Activated CD4-positive, alpha-beta T cell treated with anti-CD3 and anti-CD28 coated beads, Interleukin-2, amount 10 ng/mL, durations not matched to agents 7 days and 5 days (primary cell): ENCODE measurements at regions of chr10 and their contacts with region 1.

Region 1: GRCh38 chr10:101141616-101142532 is 10.8 kb downstream of the TLX1 start:
- DNase-seq: peak; percentile 80
- H3K4me3 Mint-ChIP-seq: no peak overlapping the region
- H3K27ac Mint-ChIP-seq: no peak overlapping the region
- H3K4me1 Mint-ChIP-seq: peaks cover 2% of the 10 kb centered on the region
- H3K27me3 Mint-ChIP-seq: peaks cover 90% of the 10 kb centered on the region

Region 2: GRCh38 chr10:101042667-101043355 is 99.1 kb before region 1 on chr10:
- CTCF ChIA-PET with region 1: interaction called, 18 read pairs
- POLR2A ChIA-PET with region 1: no interaction called
- DNase-seq: peak; percentile 89
- H3K4me3 Mint-ChIP-seq: peak overlapping the region; percentile 89
- H3K27ac Mint-ChIP-seq: peak overlapping the region; percentile 85
- H3K4me1 Mint-ChIP-seq: peaks cover 33% of the 10 kb centered on the region
- H3K27me3 Mint-ChIP-seq: peaks cover 38% of the 10 kb centered on the region

Region 3: DNA sequence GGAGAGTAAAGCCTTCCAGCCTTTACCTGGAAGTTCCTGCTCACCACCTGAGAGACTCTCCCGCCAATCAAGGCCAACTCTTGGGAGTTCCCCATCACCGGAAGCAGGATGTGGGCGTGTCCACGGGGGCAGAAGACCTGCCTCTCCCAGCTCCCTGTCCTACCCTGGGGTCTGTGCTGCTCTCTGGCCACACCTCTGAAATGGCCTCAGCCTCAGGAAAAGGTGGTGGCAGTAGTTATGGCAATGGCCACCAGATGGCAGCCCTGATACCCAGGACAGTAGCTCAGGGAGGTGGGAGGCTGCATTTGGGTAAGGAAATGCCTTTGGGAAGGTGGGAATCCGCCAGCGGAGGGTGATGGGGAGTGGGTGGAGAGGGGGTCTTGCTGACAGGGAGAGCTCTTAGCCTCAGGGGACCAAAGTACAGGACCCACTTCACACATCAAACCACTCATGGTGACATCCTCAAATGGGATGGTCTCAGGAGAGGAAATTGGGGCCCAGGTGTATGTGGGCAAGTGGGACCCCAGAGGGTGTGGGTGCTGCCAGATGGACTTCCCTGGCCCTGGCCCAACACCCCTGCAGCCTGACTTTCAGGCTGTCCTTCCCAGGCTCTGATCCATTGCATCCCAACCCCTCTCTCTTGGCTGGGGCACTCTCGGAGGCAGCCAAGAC is 46.2 kb before region 1 on chr10:
- CTCF ChIA-PET with region 1: interaction called, 90 read pairs
- POLR2A ChIA-PET with region 1: interaction called, 3 read pairs
- DNase-seq: peak; percentile 75
- H3K4me3 Mint-ChIP-seq: no peak overlapping the region
- H3K27ac Mint-ChIP-seq: no peak overlapping the region
- H3K4me1 Mint-ChIP-seq: no peaks in the 10 kb centered on the region
- H3K27me3 Mint-ChIP-seq: peaks cover 18% of the 10 kb centered on the region

Region 4: DNA sequence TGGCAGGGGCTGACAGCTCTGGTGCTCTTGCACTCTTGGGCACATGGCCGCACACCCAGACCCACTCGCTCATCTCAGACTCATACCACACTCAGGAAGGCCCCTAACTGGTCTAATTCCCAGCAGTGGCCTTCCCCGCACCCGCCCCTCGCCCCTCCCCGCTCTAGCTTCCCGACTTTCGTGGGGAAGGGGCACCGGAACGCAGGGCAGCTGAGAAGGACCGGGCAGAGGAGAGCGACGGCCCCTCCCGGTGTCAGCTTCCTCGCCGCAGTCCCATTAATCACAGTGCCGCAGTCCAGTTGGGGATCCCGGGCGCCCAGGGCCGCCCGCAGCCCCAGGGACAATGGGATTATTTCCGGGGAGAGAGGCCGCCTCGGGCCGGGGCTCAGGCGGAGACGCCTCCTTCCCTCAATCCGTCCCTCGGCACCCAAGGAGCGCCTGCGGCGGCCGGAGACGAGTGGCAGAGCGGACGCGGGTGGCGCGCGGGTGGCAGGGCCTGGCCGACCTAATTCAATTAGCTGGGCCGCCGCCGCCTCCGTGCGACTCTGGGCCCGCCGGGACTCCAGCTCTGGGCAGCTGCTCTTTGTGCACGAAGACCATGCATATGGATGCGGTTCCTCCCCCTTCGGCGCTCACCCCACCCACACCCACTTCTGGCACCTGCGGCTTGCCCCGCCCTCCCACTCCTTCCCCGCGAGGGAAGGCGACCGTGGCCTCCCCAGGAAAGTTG is 18.6 kb before region 1 on chr10:
- CTCF ChIA-PET with region 1: interaction called, 14 read pairs
- POLR2A ChIA-PET with region 1: no interaction called
- DNase-seq: no peak
- H3K4me3 Mint-ChIP-seq: no peak overlapping the region
- H3K27ac Mint-ChIP-seq: no peak overlapping the region
- H3K4me1 Mint-ChIP-seq: peaks cover 25% of the 10 kb centered on the region
- H3K27me3 Mint-ChIP-seq: peaks cover 85% of the 10 kb centered on the region

Region 5: GRCh38 chr10:101214446-101215396 is 72.8 kb after region 1 on chr10:
- CTCF ChIA-PET with region 1: interaction called, 27 read pairs
- POLR2A ChIA-PET with region 1: no interaction called
- DNase-seq: peak; percentile 69
- H3K4me3 Mint-ChIP-seq: peak overlapping the region; percentile 3
- H3K27ac Mint-ChIP-seq: peak overlapping the region; percentile 41
- H3K4me1 Mint-ChIP-seq: peaks cover 20% of the 10 kb centered on the region
- H3K27me3 Mint-ChIP-seq: peaks cover 70% of the 10 kb centered on the region